Activated naive CD4-positive, alpha-beta T cell treated with anti-CD3 and anti-CD28 coated beads for 36 hours (primary cell): ENCODE measurements at regions of chr11 and their contacts with region 1.

Region 1: DNA sequence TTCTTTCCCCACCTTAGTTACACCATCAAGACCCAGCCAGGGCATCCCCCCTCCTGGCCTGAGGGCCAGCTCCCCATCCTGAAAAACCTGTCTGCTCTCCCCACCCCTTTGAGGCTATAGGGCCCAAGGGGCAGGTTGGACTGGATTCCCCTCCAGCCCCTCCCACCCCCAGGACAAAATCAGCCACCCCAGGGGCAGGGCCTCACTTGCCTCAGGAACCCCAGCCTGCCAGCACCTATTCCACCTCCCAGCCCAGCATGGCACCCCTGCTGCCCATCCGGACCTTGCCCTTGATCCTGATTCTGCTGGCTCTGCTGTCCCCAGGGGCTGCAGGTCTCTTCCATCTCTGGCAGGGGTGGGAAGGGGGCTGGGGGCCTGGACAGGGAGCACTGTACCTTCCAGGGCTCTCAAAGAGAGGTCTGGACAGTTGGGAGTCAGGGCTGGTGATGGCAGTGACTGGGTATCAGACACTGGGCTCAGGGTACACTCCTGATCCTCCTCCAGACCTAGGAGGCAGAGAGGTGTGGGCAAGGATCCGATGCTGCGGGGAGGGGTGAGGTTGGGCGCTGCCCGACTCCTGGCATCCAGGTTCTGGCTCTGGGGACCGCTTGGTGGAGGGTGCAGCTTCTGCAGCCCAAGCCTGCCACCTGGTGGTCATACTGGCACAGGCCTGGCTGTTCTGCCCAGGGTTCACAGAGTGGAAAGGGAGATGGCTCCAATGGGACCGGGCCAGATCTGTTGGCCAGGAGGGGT is at the start of gene UPK2:
- DNase-seq: peak; percentile 95
- H3K4me3 Mint-ChIP-seq: no peak within 1 kb of the TSS
- H3K27ac Mint-ChIP-seq: no peak within 1 kb of the TSS
- H3K4me1 Mint-ChIP-seq: peaks cover 5% of the 10 kb centered on the region
- H3K27me3 Mint-ChIP-seq: no peaks in the 10 kb centered on the region
- total RNA-seq, gene UPK2: 0.25 to 0.45 TPM

Region 2: DNA sequence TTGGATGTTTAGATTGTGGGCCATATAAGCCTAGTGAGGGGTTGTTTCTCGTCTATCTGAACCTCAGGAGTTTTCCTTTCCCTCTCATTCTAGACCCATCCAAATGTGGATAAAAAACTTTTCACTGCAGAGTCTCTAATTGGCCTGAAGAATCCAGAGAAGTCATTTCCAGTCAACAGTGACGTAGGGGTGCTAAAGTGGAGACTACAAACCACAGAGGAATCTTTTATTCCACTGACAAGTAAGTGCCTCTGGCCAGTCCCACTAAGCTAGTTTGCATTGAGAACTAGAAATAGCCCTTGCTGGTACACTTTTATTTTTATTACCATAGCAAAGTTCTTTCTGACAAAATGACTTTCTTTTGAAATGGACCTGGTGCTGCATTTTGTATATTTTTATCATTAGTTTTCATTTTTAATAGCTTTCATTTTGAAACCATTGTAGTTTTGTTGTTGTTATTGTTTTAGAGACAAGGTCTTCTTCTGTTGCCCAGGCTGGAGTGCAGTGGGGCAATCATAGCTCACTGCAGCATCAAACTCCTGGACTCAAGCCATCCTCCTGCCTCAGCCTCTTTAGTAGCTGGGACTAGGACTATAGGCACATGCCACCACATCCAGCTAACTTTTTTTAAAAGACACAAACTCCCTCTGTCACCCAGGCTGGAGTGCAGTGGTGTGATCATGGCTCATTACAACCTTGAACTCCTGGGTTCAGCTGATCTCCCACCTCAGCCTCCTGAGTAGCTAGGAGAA is 363.5 kb before region 1 on chr11:
- CTCF ChIA-PET with region 1: interaction called, 3 read pairs
- intact Hi-C with region 1: loop called (anchors 2 kb)
- DNase-seq: no peak
- H3K4me3 Mint-ChIP-seq: no peak overlapping the region
- H3K27ac Mint-ChIP-seq: no peak overlapping the region
- H3K4me1 Mint-ChIP-seq: peaks cover 15% of the 10 kb centered on the region
- H3K27me3 Mint-ChIP-seq: no peaks in the 10 kb centered on the region

Region 3: GRCh38 chr11:118659314-118659952 is 296.8 kb before region 1 on chr11:
- CTCF ChIA-PET with region 1: interaction called, 7 read pairs
- intact Hi-C with region 1: loop called (anchors 1 kb)
- DNase-seq: peak; percentile 96
- H3K4me3 Mint-ChIP-seq: no peak overlapping the region
- H3K27ac Mint-ChIP-seq: no peak overlapping the region
- H3K4me1 Mint-ChIP-seq: peaks cover 5% of the 10 kb centered on the region
- H3K27me3 Mint-ChIP-seq: no peaks in the 10 kb centered on the region

Region 4: DNA sequence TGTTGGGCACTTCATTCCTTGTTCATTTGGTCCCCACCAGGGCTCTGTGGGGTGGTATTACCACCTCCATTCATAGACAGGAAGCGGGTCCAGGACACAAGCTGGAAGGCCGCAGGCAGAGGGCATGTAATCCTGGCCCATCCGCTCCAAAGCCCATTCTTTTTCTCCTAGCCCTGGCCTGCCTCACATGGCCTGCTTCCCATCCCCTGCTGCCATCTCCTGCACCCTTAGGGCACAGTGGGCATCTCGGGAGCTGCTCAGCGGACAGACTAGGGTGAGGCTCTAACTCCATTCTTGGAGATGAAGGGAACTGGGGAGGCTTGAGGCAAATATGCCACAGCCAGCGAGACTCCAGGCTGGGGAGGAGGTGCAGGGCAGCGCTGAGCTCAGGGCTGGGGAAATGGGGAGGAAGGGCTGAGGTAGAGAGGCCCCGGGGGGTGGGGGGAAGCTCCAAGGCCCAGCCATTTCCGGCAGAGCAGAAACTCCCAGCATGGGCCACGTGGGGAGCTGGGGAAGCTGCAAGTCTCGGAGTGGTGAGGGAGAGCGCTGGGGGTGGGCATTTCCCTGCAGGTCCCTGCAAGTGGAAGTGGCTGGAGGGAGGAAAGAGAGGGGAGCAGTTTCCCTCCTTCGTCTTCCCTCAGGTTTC is 16.2 kb before region 1 on chr11:
- CTCF ChIA-PET with region 1: interaction called, 18 read pairs
- intact Hi-C with region 1: no loop called
- DNase-seq: peak; percentile 90
- H3K4me3 Mint-ChIP-seq: peak overlapping the region; percentile 55
- H3K27ac Mint-ChIP-seq: peak overlapping the region; percentile 56
- H3K4me1 Mint-ChIP-seq: peaks cover 36% of the 10 kb centered on the region
- H3K27me3 Mint-ChIP-seq: no peaks in the 10 kb centered on the region